ENCODE measurements at regions of chr19 and their contacts with region 1.

Region 1: DNA sequence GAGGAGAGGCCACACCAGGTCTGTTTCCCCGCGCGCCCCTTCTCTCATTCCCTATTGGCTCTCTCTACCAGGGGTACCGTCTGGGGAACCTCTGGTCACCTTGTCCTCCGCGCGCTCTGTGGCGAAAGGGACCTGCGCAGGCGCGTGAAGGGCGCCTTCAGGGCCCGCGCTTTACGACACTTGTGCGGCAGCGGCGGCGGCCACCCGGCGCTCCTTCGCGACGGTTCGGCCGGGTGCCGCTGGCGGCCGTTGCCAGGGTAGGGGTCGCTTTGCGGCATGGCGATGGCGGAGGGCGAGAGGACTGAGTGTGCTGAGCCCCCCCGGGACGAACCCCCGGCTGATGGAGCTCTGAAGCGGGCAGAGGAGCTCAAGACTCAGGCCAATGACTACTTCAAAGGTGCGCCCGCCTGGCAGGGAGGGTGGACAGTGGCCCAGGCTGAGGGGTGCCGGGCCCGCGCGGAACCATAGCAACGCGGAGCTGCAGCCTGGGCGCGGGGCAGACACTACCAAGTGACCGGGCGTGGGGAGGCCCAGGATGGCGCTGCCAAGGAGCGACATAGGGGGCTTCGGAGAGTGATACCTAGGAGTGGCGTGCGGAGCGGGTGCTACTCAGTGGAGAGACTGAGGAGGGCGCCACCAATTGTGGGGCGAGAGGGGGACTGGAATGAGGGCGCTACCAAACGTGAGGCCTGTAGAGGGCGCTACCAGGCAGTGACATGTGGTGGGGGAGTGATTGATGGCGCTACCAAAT is at the start of gene PPP5C:
- DNase-seq: peak; percentile 94
- H3K4me3 ChIP-seq: peak within 1 kb of the TSS; percentile 76 to 90 (median 85)
- H3K27ac ChIP-seq: peak within 1 kb of the TSS; percentile 53 to 90 (median 85)
- H3K4me1 ChIP-seq: peaks cover 45 to 51% of the 10 kb centered on the region in 2 donors
- H3K27me3 ChIP-seq: no peaks in the 10 kb centered on the region
- CTCF ChIP-seq: peak; percentile 33 to 83 (median 66)
- POLR2A ChIP-seq: peak in 1 of 2 donors; percentile 81
- total RNA-seq, gene PPP5C: 63.3 to 112 (median 80.7) TPM

Region 2: DNA sequence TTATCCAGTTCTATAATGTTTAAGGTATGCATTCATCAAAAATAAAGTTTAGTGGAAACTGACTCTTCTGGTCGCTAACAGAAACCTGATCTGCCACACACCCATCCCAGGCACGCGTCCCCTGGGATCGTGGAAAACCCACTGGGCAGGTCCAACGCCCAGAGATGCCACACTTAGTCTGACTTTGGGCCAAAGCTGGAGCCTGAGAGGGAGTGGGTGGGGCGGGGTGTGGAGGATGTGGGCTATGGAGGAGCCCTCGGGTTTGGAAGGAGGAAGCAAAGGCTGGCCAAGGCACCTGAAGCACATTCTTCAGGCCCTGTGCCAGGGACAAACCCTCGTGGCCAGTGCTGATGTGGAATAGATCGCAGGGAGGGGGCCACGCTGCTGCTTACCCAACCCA is 115.0 kb before region 1 on chr19:
- intact Hi-C with region 1: no loop called
- DNase-seq: no peak
- H3K4me3 ChIP-seq: no peak overlapping the region
- H3K27ac ChIP-seq: no peak overlapping the region
- H3K4me1 ChIP-seq: no peaks in the 10 kb centered on the region
- H3K27me3 ChIP-seq: no peaks in the 10 kb centered on the region
- CTCF ChIP-seq: no peak
- POLR2A ChIP-seq: no peak

Region 3: DNA sequence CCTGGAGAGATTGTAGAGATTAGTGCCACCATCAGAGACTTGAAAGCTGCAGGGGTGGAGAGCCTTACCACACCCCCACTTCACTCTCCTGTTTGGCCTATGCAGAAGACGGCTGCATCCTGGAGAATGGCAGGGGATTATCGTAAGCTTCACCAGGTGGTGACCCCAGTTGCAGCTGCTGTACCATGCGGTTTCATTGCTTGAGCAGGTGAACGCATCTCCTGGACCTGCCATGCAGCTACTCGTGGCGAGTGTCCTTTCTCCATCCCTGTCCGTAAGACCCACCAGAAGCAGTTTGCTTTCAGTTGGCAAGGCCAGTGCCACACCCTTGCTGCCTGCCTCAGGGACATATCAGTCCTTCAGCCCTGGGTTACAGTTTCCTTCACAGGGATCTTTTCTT is 21.1 kb after region 1 on chr19:
- intact Hi-C with region 1: loop called (anchors 2 kb)
- DNase-seq: no peak
- H3K4me3 ChIP-seq: no peak overlapping the region
- H3K27ac ChIP-seq: no peak overlapping the region
- H3K4me1 ChIP-seq: peaks cover 8 to 11% of the 10 kb centered on the region in 2 donors
- H3K27me3 ChIP-seq: no peaks in the 10 kb centered on the region
- CTCF ChIP-seq: no peak
- POLR2A ChIP-seq: no peak

Measured in thyroid gland (tissue), 4 donors.